ENCODE measurements at regions of chr13 and their contacts with region 1.

Region 1: DNA sequence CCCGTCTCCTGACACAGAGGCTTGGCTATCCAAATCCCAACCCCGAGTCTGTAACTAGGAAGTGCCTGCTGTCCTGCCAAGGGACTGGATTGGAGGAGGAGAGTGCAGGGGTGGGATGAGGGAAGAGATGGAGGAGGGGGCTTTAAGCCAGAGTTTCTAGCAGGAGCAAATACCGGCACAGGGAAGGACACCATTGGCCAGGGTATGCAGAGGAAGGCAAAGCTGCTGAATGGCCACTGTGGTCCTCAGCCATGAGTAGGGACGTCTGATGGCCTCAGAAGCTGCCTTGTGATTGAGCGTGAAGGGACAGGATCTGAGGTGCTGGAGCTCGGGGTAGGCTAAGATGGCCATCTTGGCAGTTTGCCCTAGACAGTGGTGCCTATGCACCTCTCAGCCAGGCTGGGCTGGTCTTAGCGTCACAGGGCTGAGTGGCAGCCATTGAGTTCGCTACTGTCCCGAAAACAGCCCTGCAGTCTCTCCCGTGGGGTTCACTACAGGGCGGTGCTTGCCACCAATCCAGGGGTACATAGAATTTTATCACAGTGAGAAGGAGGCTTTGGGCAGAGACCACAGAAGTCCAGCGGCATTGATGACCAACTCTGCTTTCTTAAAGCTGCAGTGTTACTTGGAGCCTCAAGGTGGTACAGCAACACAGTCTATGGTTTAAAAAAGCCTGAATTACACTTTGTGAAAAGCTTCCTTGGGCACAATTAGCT is 61.8 kb downstream of the AKAP11 start:
- DNase-seq: no peak
- ATAC-seq: peak; percentile 92
- H3K4me3 ChIP-seq: no peak overlapping the region
- H3K27ac ChIP-seq: peak overlapping the region; percentile 73
- H3K4me1 ChIP-seq: peaks cover 18% of the 10 kb centered on the region
- H3K27me3 ChIP-seq: no peaks in the 10 kb centered on the region
- CTCF ChIP-seq: peak; percentile 74 to 87 (median 83); a peak in 5 of 6 replicates
- EP300 ChIP-seq: no peak
- POLR2A ChIP-seq: no peak
- RAD21 ChIP-seq: peak; percentile 98

Region 2: DNA sequence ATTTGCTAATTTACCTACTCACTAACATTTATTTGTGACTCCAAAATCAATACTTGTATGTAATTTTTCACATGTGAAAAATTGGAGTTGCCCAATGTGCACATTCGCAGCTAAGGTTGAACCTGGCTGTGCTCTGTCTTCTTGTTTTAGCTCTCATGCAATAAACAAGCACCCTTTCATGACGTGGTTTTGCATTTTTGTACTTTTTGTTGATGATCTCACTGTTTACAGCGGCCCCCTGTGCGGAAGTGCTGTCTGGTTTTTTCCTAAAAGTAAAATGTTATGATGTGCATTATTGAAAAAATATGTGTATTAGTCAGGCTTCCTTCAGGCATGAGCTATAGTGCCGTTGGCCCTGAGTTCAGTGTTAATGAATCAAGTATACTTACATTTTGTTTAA is 267.2 kb before region 1 on chr13:
- CTCF ChIA-PET with region 1: no interaction called
- POLR2A ChIA-PET with region 1: no interaction called
- RAD21 ChIA-PET with region 1: no interaction called
- SMC1A ChIA-PET with region 1: no interaction called
- in situ Hi-C with region 1: no loop called
- intact Hi-C with region 1: no loop called
- DNase-seq: no peak
- ATAC-seq: no peak
- H3K4me3 ChIP-seq: no peak overlapping the region
- H3K27ac ChIP-seq: no peak overlapping the region
- H3K4me1 ChIP-seq: no peaks in the 10 kb centered on the region
- H3K27me3 ChIP-seq: no peaks in the 10 kb centered on the region
- CTCF ChIP-seq: no peak
- EP300 ChIP-seq: no peak
- POLR2A ChIP-seq: no peak
- RAD21 ChIP-seq: no peak

Region 3: DNA sequence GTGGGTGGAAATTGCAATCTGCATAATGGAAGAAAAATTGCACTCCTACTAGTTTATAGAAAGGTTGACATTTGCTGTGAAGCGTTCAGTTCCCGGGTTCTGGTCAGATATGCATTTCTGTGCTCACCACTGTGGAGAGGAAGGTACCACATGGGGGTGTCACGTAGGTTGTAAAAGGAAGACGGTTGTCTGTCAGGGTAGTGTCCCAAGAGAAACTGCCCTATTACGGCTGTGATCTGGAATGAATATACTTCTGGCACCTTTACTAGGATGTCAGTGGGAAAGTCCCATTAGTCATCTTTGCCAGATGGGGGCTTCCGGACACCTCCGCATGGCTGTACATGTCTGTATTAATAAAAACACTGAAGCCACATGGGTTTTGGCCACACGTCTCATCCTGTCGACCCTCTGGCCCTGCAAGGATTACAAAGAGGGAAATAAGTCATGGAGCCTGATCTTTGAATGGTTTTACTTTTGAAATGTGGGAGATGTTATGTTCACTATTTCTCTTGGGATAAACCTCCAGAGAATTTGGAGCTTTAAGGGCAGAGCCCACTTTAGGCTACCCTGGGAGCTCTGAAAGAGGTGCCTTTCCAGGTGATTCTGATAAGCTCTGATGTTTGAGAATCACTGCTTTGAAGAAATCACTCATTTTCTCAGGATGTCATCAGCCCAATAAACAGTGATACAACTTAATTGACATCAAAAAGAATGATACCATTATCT is 72.1 kb after region 1 on chr13:
- CTCF ChIA-PET with region 1: interaction called, 6 read pairs
- POLR2A ChIA-PET with region 1: no interaction called
- RAD21 ChIA-PET with region 1: interaction called, 6 read pairs
- SMC1A ChIA-PET with region 1: interaction called, 6 read pairs
- in situ Hi-C with region 1: no loop called
- intact Hi-C with region 1: loop called (anchors 2 kb)
- DNase-seq: peak; percentile 97
- ATAC-seq: peak; percentile 90
- H3K4me3 ChIP-seq: peak overlapping the region; percentile 31; the same call in 1 of the 2 replicates
- H3K27ac ChIP-seq: peak overlapping the region; percentile 98
- H3K4me1 ChIP-seq: peaks cover 54% of the 10 kb centered on the region
- H3K27me3 ChIP-seq: no peaks in the 10 kb centered on the region
- CTCF ChIP-seq: 0 out of 6 replicates have a peak, but pooled peaks of 1 of the 3 experiments have one; percentile 5
- EP300 ChIP-seq: peak; percentile 86 to 97
- POLR2A ChIP-seq: peak; percentile 48; the same call in 1 of the 2 replicates
- RAD21 ChIP-seq: peak; percentile 45

Region 4: DNA sequence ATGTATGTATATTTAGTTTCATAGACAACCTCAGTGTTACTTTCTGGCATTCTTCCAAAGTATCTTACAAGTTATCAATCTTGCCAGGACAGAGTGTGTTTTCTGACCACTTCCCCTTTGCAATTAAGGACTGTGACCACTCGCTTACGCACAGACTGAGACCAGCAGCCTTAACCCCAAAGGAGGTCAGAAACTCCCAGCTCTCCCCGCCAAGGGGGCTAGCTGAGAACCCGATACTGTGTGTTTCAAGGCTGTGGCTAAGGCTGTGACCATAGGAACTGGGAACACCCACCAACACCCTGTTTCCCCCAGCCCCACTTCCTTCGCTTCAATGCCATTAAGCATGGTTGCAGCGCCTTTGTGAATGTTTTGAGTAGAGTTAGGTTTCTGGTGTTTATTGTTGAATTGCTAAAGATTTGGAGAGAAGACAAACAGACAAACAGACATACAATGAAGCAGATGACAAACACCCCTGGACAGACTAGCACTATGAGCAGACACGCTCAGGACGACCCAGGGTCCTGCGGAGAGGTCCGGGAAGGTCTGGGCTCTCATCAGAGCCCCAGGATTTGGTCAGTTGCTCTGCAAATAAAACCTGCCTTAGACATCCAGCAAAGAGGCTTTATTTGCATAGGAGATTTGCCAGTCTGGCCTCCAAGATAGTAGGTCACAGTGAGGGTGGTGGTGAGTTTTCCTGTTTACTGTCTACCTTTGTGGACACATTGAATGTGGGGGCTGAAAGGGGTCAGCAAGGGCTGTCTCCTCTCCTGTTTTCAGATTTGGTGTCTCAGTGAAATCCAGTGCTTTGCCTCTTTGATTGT is 215.2 kb after region 1 on chr13:
- CTCF ChIA-PET with region 1: interaction called, 5 read pairs
- POLR2A ChIA-PET with region 1: no interaction called
- RAD21 ChIA-PET with region 1: interaction called, 6 read pairs
- SMC1A ChIA-PET with region 1: interaction called, 5 read pairs
- in situ Hi-C with region 1: no loop called
- intact Hi-C with region 1: loop called (anchors 1 kb)
- DNase-seq: peak; percentile 98
- ATAC-seq: peak; percentile 97
- H3K4me3 ChIP-seq: peak overlapping the region; percentile 33
- H3K27ac ChIP-seq: peak overlapping the region; percentile 66
- H3K4me1 ChIP-seq: peaks cover 27% of the 10 kb centered on the region
- H3K27me3 ChIP-seq: no peaks in the 10 kb centered on the region
- CTCF ChIP-seq: no peak
- EP300 ChIP-seq: peak; percentile 99
- POLR2A ChIP-seq: 0 out of 2 replicates have a peak, but pooled peaks have one; percentile 19
- RAD21 ChIP-seq: peak; percentile 35; the same call in 1 of the 2 replicates

Region 5: DNA sequence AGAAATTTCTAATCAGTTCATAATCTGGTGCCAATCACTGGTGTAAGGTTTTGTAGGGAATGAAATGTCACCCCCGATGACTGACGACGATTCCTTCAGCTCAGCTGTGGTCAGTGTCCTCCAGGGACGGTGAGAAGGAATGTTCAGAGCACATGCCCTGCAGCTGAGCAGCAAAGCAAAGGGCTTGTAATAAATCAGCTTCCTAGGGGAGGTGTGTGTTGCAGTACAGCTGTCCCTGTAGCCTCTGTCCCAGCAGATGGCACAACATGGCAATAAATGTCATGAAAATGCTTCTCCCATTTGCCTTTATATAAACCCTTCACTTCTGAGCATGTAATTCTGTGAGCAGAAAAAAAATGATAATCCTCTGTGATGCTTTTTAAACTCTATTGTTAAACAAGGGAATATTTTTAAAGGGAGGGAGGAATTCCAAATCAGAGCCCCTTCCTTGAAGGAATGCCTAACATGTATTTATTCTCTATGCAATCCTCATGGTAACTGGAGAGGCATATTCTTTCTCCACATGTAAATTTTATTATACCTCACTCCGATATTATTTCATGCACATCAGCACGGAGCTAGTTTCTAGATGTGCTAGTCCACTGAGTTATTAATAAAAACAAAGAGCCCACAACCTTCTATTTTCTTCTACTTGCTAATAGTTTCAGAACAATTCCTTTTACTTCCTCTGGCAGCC is 550.1 kb after region 1 on chr13:
- CTCF ChIA-PET with region 1: no interaction called
- POLR2A ChIA-PET with region 1: interaction called, 3 read pairs
- RAD21 ChIA-PET with region 1: no interaction called
- SMC1A ChIA-PET with region 1: interaction called, 3 read pairs
- in situ Hi-C with region 1: no loop called
- intact Hi-C with region 1: loop called (anchors 10 kb)
- DNase-seq: no peak
- ATAC-seq: peak; percentile 50; the same call in 2 of the 3 replicates
- H3K4me3 ChIP-seq: no peak overlapping the region
- H3K27ac ChIP-seq: no peak overlapping the region
- H3K4me1 ChIP-seq: no peaks in the 10 kb centered on the region
- H3K27me3 ChIP-seq: no peaks in the 10 kb centered on the region
- CTCF ChIP-seq: peak in 2 of 3 experiments; percentile 9 to 48; a peak in 3 of 6 replicates
- EP300 ChIP-seq: no peak
- POLR2A ChIP-seq: no peak
- RAD21 ChIP-seq: 0 out of 2 replicates have a peak, but pooled peaks have one; percentile 25

Region 6: GRCh38 chr13:43364210-43365038 is 1030.7 kb after region 1 on chr13:
- CTCF ChIA-PET with region 1: no interaction called
- POLR2A ChIA-PET with region 1: no interaction called
- RAD21 ChIA-PET with region 1: no interaction called
- SMC1A ChIA-PET with region 1: no interaction called
- in situ Hi-C with region 1: no loop called
- intact Hi-C with region 1: no loop called
- DNase-seq: no peak
- ATAC-seq: no peak
- H3K4me3 ChIP-seq: no peak overlapping the region
- H3K27ac ChIP-seq: no peak overlapping the region
- H3K4me1 ChIP-seq: no peaks in the 10 kb centered on the region
- H3K27me3 ChIP-seq: no peaks in the 10 kb centered on the region
- CTCF ChIP-seq: no peak
- EP300 ChIP-seq: no peak
- POLR2A ChIP-seq: no peak
- RAD21 ChIP-seq: no peak

Measured in GM12878 (cell line).